CD4-positive, alpha-beta memory T cell (primary cell): ENCODE measurements at regions of chr19 and their contacts with region 1.

Region 1: GRCh38 chr19:3434712-3435553 is 45.4 kb downstream of the SMIM24 start:
- DNase-seq: peak; percentile 92 to 96 (median 95)
- H3K4me3 ChIP-seq: peak overlapping the region; percentile 68 to 95
- H3K4me3 Mint-ChIP-seq: peak overlapping the region; percentile 92 to 99 (median 96)
- H3K27ac ChIP-seq: peak overlapping the region; percentile 84
- H3K27ac Mint-ChIP-seq: peak overlapping the region; percentile 94 to 99 (median 99)
- H3K4me1 ChIP-seq: peaks cover 12% of the 10 kb centered on the region
- H3K4me1 Mint-ChIP-seq: peaks cover 9 to 21% (median 14%) of the 10 kb centered on the region in 4 donors
- H3K27me3 ChIP-seq: no peaks in the 10 kb centered on the region
- H3K27me3 Mint-ChIP-seq: no peaks in the 10 kb centered on the region

Region 2: GRCh38 chr19:3324321-3324856 is 110.5 kb before region 1 on chr19:
- CTCF ChIA-PET with region 1: interaction called, 150 read pairs
- POLR2A ChIA-PET with region 1: interaction called, 11 read pairs
- intact Hi-C with region 1: no loop called
- DNase-seq: peak; percentile 50 to 66 (median 60)
- H3K4me3 ChIP-seq: no peak overlapping the region
- H3K4me3 Mint-ChIP-seq: no peak overlapping the region
- H3K27ac ChIP-seq: no peak overlapping the region
- H3K27ac Mint-ChIP-seq: peak overlapping the region in 1 of 7 donors; percentile 63
- H3K4me1 ChIP-seq: no peaks in the 10 kb centered on the region
- H3K4me1 Mint-ChIP-seq: peaks cover 0 to 2% (median under 1%) of the 10 kb centered on the region in 4 donors
- H3K27me3 ChIP-seq: no peaks in the 10 kb centered on the region
- H3K27me3 Mint-ChIP-seq: peaks cover 9 to 19% of the 10 kb centered on the region in 2 donors

Region 3: DNA sequence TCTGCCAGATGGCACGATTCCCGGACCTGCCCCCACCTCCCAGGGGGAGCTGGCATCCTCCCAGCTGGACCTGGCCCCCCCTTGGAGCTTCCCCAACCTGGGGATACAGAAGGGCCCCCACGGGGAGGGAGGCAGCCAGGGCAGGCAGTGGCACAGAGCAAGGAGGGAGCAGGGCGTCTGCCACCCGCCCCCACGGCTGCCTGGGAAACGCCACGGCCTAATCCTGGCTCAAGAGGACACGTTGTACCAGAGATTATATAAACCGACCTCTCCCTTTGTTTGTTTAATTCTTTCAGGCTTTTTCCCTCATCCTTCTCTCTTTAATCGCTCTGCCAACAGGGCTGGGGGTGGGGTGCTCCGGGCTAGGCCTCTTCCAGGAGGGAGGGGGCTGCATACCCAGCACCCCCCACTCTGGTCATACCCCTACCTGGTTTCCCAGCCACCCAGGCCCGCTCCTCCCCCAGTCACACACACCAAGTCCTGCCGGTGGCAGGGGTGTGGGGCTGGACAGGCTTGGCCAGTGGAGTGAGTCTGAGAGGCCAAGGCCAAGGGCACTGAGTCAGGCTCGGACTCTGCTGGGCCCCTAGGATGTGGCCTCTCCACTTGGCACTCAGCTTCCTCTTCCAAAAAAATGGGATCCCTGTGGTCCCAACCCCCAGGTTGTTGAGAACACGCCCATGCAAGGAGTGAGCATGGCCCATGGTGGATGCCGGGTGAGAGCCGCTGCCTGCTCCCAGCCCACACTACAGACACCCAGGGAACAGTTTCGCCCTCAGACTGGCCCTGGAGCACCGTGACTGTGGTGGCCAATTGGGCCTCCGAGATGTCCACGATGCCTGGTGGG is 98.0 kb before region 1 on chr19:
- CTCF ChIA-PET with region 1: interaction called, 21 read pairs
- POLR2A ChIA-PET with region 1: interaction called, 11 read pairs
- intact Hi-C with region 1: no loop called
- DNase-seq: no peak
- H3K4me3 ChIP-seq: no peak overlapping the region
- H3K4me3 Mint-ChIP-seq: no peak overlapping the region
- H3K27ac ChIP-seq: no peak overlapping the region
- H3K27ac Mint-ChIP-seq: no peak overlapping the region
- H3K4me1 ChIP-seq: peaks cover 10% of the 10 kb centered on the region
- H3K4me1 Mint-ChIP-seq: peaks cover 4 to 21% (median 10%) of the 10 kb centered on the region in 4 donors
- H3K27me3 ChIP-seq: no peaks in the 10 kb centered on the region
- H3K27me3 Mint-ChIP-seq: no peaks in the 10 kb centered on the region

Region 4: GRCh38 chr19:3365836-3366752 is 68.8 kb before region 1 on chr19 and contains the start of gene NFIC:
- CTCF ChIA-PET with region 1: interaction called, 5 read pairs
- POLR2A ChIA-PET with region 1: interaction called, 5 read pairs
- intact Hi-C with region 1: loop called (anchors 10 kb)
- DNase-seq: peak in 1 of 5 donors; percentile 58
- H3K4me3 ChIP-seq: peak within 1 kb of the TSS in 1 of 2 donors; percentile 43
- H3K4me3 Mint-ChIP-seq: peak within 1 kb of the TSS; percentile 72 to 81 (median 77)
- H3K27ac ChIP-seq: peak within 1 kb of the TSS; percentile 22
- H3K27ac Mint-ChIP-seq: peak within 1 kb of the TSS in 3 of 7 donors; percentile 38 to 83 (median 68)
- H3K4me1 ChIP-seq: peaks cover 31% of the 10 kb centered on the region
- H3K4me1 Mint-ChIP-seq: peaks cover 31 to 69% (median 45%) of the 10 kb centered on the region in 4 donors
- H3K27me3 ChIP-seq: no peaks in the 10 kb centered on the region
- H3K27me3 Mint-ChIP-seq: no peaks in the 10 kb centered on the region
- total RNA-seq, gene NFIC: 30.3 to 30.9 TPM

Region 5: DNA sequence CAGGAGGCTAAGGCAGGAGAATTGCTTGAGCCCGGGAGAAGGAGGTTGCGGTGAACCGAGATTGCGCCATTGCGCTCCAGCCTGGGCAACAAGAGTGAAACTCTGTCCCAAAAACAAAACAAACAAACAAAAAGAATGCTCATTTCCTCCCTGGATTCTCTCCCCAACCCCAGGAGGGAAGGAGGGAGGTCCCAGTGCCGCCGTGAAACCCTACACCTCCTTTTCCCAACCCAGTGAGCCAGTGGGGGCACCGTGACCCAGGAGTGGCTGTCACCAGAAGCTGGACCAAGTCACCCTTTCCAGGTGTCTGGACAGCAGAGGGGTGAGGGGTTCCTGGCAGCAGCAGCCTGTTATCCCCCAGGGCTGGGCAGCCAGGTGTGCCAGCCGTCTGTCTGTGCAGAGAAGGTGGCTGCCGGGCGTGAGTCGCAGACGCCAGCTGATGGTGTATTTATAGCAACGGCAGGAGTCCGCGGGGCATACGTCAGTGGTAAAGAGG is 45.0 kb before region 1 on chr19:
- CTCF ChIA-PET with region 1: no interaction called
- POLR2A ChIA-PET with region 1: no interaction called
- intact Hi-C with region 1: no loop called
- DNase-seq: no peak
- H3K4me3 ChIP-seq: no peak overlapping the region
- H3K4me3 Mint-ChIP-seq: no peak overlapping the region
- H3K27ac ChIP-seq: no peak overlapping the region
- H3K27ac Mint-ChIP-seq: no peak overlapping the region
- H3K4me1 ChIP-seq: no peaks in the 10 kb centered on the region
- H3K4me1 Mint-ChIP-seq: peaks cover 6 to 11% (median 7%) of the 10 kb centered on the region in 4 donors
- H3K27me3 ChIP-seq: no peaks in the 10 kb centered on the region
- H3K27me3 Mint-ChIP-seq: no peaks in the 10 kb centered on the region

Region 6: GRCh38 chr19:3500429-3501130 is 65.6 kb after region 1 on chr19 and contains the start of gene DOHH:
- CTCF ChIA-PET with region 1: interaction called, 3 read pairs
- POLR2A ChIA-PET with region 1: interaction called, 3 read pairs
- intact Hi-C with region 1: loop called (anchors 1 kb)
- DNase-seq: peak; percentile 94 to 96 (median 95)
- H3K4me3 ChIP-seq: peak within 1 kb of the TSS; percentile 64 to 87
- H3K4me3 Mint-ChIP-seq: peak within 1 kb of the TSS; percentile 82 to 98 (median 93)
- H3K27ac ChIP-seq: peak within 1 kb of the TSS; percentile 85
- H3K27ac Mint-ChIP-seq: peak within 1 kb of the TSS; percentile 91 to 100 (median 95)
- H3K4me1 ChIP-seq: peaks cover 32% of the 10 kb centered on the region
- H3K4me1 Mint-ChIP-seq: peaks cover 21 to 42% (median 26%) of the 10 kb centered on the region in 4 donors
- H3K27me3 ChIP-seq: no peaks in the 10 kb centered on the region
- H3K27me3 Mint-ChIP-seq: no peaks in the 10 kb centered on the region
- total RNA-seq, gene DOHH: 8.3 TPM

Region 7: GRCh38 chr19:3505598-3506383 is 70.9 kb after region 1 on chr19 and contains the start of gene FZR1:
- CTCF ChIA-PET with region 1: no interaction called
- POLR2A ChIA-PET with region 1: interaction called, 3 read pairs
- intact Hi-C with region 1: loop called (anchors 1 kb)
- DNase-seq: peak; percentile 99 to 100 (median 100)
- H3K4me3 ChIP-seq: peak within 1 kb of the TSS; percentile 73 to 77
- H3K4me3 Mint-ChIP-seq: peak within 1 kb of the TSS; percentile 87 to 96 (median 92)
- H3K27ac ChIP-seq: peak within 1 kb of the TSS; percentile 91
- H3K27ac Mint-ChIP-seq: peak within 1 kb of the TSS; percentile 96 to 99 (median 97)
- H3K4me1 ChIP-seq: peaks cover 52% of the 10 kb centered on the region
- H3K4me1 Mint-ChIP-seq: peaks cover 33 to 62% (median 46%) of the 10 kb centered on the region in 4 donors
- H3K27me3 ChIP-seq: no peaks in the 10 kb centered on the region
- H3K27me3 Mint-ChIP-seq: no peaks in the 10 kb centered on the region
- total RNA-seq, gene FZR1: 73.3 to 73.7 TPM

Region 8: GRCh38 chr19:3538965-3539742 is 104.2 kb after region 1 on chr19 and contains the start of gene TEKTIP1:
- CTCF ChIA-PET with region 1: no interaction called
- POLR2A ChIA-PET with region 1: no interaction called
- intact Hi-C with region 1: no loop called
- DNase-seq: no peak
- H3K4me3 ChIP-seq: no peak within 1 kb of the TSS
- H3K4me3 Mint-ChIP-seq: no peak within 1 kb of the TSS
- H3K27ac ChIP-seq: no peak within 1 kb of the TSS
- H3K27ac Mint-ChIP-seq: peak within 1 kb of the TSS in 3 of 7 donors; percentile 30 to 62 (median 57)
- H3K4me1 ChIP-seq: no peaks in the 10 kb centered on the region
- H3K4me1 Mint-ChIP-seq: no peaks in the 10 kb centered on the region
- H3K27me3 ChIP-seq: no peaks in the 10 kb centered on the region
- H3K27me3 Mint-ChIP-seq: no peaks in the 10 kb centered on the region
- total RNA-seq, gene TEKTIP1: 8.1 to 10.6 TPM